ENCODE measurements at regions of chr3 and their contacts with region 1.

Region 1: GRCh38 chr3:23834082-23834870 is 28.5 kb downstream of the UBE2E1 start:
- DNase-seq: peak; percentile 18 to 60 (median 49)
- H3K4me3 ChIP-seq: peak overlapping the region in 3 of 7 experiments; percentile 7 to 49 (median 16)
- H3K27ac ChIP-seq: no peak overlapping the region
- H3K4me1 ChIP-seq: peaks cover 42 to 63% (median 48%) of the 10 kb centered on the region in 4 experiments
- H3K27me3 ChIP-seq: no peaks in the 10 kb centered on the region

Region 2: GRCh38 chr3:23845326-23846221 is 11.3 kb after region 1 on chr3:
- CTCF ChIA-PET with region 1: interaction called, 45 read pairs
- POLR2A ChIA-PET with region 1: no interaction called
- DNase-seq: peak in 2 of 3 donors; percentile 37 to 48
- H3K4me3 ChIP-seq: no peak overlapping the region
- H3K27ac ChIP-seq: peak overlapping the region in 1 of 2 experiments; percentile 16
- H3K4me1 ChIP-seq: peaks cover 4 to 12% (median 8%) of the 10 kb centered on the region in 4 experiments
- H3K27me3 ChIP-seq: no peaks in the 10 kb centered on the region

Region 3: DNA sequence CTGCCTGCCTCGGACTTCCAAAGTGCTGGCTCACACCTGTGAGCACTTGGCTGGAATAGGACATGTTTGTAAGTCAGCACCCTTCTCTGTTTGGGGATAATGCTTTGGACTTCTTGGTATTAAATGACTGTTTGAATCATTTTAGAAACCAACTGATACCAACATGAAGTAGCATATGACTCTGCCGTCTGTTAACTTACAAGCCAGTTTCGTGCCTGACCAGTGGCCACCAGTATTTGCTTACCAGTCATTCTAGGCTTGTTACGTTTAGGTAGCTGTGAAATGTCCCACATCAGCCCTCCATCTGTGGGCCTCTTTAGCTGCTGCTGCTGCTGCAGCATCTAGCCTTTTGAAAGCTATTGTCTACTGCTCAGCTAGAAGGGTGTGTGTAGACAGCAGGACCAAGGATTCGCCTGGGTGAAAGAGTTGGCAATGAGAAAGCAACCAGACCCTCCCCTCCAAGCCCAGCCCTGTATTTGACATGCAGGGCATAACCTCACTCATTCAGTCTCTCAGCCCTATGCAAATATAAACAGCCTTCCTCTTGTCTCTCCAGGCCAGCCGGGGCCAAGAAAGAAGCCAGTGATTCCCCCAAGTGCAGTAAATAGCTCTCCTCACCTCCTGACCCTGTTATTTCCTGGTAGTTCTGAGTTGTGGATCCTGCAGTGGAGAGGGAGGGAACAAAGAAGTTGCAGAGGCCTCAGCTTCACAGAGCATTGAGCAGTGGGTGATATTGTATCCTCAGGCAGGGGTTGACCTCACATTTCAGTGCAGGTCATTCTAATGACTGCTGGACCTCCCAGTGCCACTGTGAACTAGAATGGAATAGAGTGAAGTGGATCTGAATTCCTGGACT is 31.5 kb after region 1 on chr3:
- CTCF ChIA-PET with region 1: interaction called, 29 read pairs
- POLR2A ChIA-PET with region 1: no interaction called
- DNase-seq: no peak
- H3K4me3 ChIP-seq: no peak overlapping the region
- H3K27ac ChIP-seq: no peak overlapping the region
- H3K4me1 ChIP-seq: peaks cover 1 to 20% (median 13%) of the 10 kb centered on the region in 4 experiments
- H3K27me3 ChIP-seq: no peaks in the 10 kb centered on the region

Region 4: DNA sequence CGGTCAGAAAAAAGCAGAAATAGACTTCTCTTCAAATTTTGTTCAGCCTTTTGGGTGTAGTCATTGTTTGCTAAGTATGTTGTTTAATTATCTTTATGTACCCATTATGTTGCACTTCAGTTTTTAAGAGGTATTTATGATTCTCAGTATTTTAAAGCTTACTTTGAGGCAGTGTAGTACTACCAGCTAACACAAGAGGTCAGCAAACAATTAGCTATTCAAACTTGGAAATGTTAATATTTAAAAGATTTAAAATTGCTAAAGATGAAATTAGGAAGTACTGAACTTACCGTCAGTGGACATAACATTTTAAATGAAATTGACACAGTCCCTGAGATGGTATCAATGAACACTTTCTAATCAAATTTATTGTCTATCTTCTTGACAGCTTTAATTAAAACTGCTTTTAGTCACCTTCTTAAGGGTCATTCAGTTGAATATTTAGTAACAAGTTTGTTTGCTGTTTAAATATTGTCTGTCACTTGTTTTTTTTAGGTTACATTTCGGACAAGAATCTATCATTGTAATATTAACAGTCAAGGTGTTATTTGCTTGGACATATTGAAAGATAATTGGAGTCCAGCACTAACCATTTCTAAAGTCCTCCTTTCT is 54.4 kb after region 1 on chr3:
- CTCF ChIA-PET with region 1: interaction called, 35 read pairs
- POLR2A ChIA-PET with region 1: no interaction called
- DNase-seq: peak; percentile 64 to 84 (median 76)
- H3K4me3 ChIP-seq: no peak overlapping the region
- H3K27ac ChIP-seq: peak overlapping the region in 1 of 2 experiments; percentile 21
- H3K4me1 ChIP-seq: peaks cover 0 to 6% (median 4%) of the 10 kb centered on the region in 4 experiments
- H3K27me3 ChIP-seq: no peaks in the 10 kb centered on the region